Activated CD4-positive, alpha-beta memory T cell treated with anti-CD3 and anti-CD28 coated beads for 36 hours (primary cell): ENCODE measurements at regions of chr6 and their contacts with region 1.

Region 1: DNA sequence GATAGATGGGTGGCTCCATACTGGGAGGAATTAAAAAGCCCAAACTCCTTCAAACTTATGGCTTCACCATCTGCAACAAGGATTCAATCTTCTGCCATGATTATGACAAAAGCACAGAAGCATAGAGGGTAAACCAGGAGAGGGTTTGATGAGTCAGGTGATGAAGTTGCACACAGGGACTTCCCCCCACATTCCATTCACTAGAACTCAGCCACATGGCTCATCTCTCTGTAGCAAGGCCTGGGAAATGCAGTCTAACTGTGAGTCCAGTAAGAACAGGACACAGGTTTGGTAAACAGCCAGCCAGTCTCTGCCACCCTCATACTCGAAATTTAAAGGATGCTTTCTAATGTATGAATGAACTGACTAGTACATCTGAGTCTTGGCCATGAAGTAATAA is 142.9 kb downstream of the HIVEP2 start:
- DNase-seq: peak; percentile 77
- H3K4me3 Mint-ChIP-seq: no peak overlapping the region
- H3K27ac Mint-ChIP-seq: peak overlapping the region; percentile 79
- H3K4me1 Mint-ChIP-seq: peaks cover 95% of the 10 kb centered on the region
- H3K27me3 Mint-ChIP-seq: no peaks in the 10 kb centered on the region

Region 2: DNA sequence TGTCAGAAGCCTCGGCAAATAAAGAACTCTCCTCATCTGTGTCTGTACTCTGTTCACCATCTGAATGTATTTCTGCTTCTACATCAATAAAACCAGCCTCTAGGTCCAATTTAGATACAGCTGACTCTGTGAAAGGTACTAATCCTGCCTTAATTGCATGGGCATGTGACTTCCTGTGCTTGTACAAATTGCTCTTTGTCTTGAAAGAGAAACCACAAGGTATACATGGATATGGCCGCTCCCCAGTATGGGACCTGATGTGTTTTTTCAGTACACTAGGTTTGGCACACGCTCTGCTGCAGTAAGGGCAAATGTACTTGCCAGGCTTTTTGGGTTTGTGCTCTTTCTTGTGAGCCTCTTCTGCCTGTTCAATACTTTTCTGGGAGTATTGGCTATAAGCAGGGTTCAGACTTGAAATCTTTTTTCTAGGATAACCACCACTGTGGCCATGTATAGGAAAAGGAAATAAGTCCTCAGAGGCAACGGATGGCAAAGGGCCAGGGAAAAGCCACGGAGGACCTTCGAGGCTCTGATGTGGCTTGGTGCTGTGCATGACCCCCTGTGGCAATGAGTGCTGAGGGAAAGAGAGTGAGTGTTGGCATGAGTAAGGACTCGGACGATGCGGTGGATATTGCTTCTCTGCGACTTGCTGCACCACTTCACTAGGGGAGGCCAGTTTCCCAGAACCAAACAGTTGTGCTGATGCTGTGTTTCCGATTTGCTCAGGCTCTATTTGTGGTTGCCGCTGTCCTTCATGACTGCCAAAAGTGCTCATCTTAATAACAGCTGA is 28.1 kb before region 1 on chr6:
- CTCF ChIA-PET with region 1: interaction called, 3 read pairs
- POLR2A ChIA-PET with region 1: interaction called, 3 read pairs
- intact Hi-C with region 1: loop called (anchors 1 kb)
- DNase-seq: peak; percentile 56
- H3K4me3 Mint-ChIP-seq: peak overlapping the region; percentile 62
- H3K27ac Mint-ChIP-seq: peak overlapping the region; percentile 93
- H3K4me1 Mint-ChIP-seq: peaks cover 62% of the 10 kb centered on the region
- H3K27me3 Mint-ChIP-seq: no peaks in the 10 kb centered on the region

Region 3: GRCh38 chr6:142784344-142784743 is 17.8 kb before region 1 on chr6:
- CTCF ChIA-PET with region 1: interaction called, 3 read pairs
- POLR2A ChIA-PET with region 1: interaction called, 3 read pairs
- intact Hi-C with region 1: loop called (anchors 1 kb)
- DNase-seq: no peak
- H3K4me3 Mint-ChIP-seq: no peak overlapping the region
- H3K27ac Mint-ChIP-seq: peak overlapping the region; percentile 36
- H3K4me1 Mint-ChIP-seq: peaks cover 67% of the 10 kb centered on the region
- H3K27me3 Mint-ChIP-seq: no peaks in the 10 kb centered on the region

Region 4: GRCh38 chr6:142850679-142851423 is 48.7 kb after region 1 on chr6:
- CTCF ChIA-PET with region 1: interaction called, 3 read pairs
- POLR2A ChIA-PET with region 1: interaction called, 4 read pairs
- intact Hi-C with region 1: loop called (anchors 1 kb)
- DNase-seq: peak; percentile 71
- H3K4me3 Mint-ChIP-seq: peak overlapping the region; percentile 58
- H3K27ac Mint-ChIP-seq: peak overlapping the region; percentile 94
- H3K4me1 Mint-ChIP-seq: peaks cover 97% of the 10 kb centered on the region
- H3K27me3 Mint-ChIP-seq: no peaks in the 10 kb centered on the region

Region 5: GRCh38 chr6:142893075-142893474 is 91.0 kb after region 1 on chr6:
- CTCF ChIA-PET with region 1: no interaction called
- POLR2A ChIA-PET with region 1: no interaction called
- intact Hi-C with region 1: no loop called
- DNase-seq: no peak
- H3K4me3 Mint-ChIP-seq: no peak overlapping the region
- H3K27ac Mint-ChIP-seq: no peak overlapping the region
- H3K4me1 Mint-ChIP-seq: peaks cover 64% of the 10 kb centered on the region
- H3K27me3 Mint-ChIP-seq: no peaks in the 10 kb centered on the region